ENCODE measurements at regions of chr4 and their contacts with region 1.

Region 1: DNA sequence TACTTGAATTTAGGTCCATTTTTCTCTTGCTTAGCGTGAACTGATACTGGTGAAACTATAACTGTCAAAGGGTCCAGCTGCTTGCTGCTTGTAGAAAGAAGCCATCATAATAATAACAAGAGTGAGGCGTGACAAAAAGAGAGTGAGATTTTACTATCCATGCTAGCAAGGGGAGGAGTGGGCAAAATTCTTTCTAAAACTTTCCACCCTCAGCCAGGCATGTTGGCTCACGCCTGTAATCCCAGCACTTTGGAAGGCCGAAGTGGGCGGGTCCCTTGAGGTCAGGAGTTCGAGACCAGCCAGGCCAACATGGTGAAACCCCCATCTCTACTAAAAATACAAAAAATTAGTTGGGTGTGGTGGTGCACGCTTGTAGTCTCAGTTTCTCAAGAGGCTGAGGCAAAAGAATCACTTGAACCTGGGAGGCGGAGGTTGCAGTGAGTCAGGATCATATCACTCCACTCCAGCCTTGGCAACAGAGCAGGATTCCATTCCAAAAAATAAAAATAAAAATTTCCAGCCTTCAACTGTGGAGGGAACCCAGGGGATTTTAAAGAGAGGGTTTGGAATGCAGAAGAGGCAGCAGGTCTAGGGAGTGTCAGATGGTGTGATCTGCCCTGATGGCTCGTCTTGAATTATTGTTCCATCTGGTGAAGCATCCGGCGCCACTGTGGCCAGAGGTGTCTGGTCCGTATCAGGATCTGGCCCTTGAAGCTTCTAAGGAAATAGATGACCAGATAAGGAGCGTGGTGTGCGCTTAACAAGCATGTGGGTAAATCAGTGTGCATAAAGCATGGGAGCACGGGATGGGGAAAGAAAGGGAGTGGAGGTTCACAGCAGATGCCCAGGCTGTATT is 51.8 kb downstream of the LRP2BP start:
- DNase-seq: no peak
- ATAC-seq: no peak
- H3K4me3 ChIP-seq: no peak overlapping the region
- H3K4me3 Mint-ChIP-seq: no peak overlapping the region
- H3K27ac ChIP-seq: peak overlapping the region in 1 of 2 donors; percentile 67
- H3K27ac Mint-ChIP-seq: peak overlapping the region; percentile 74
- H3K4me1 ChIP-seq: peaks cover 29 to 34% of the 10 kb centered on the region in 2 donors
- H3K4me1 Mint-ChIP-seq: peaks cover 56% of the 10 kb centered on the region
- H3K27me3 ChIP-seq: no peaks in the 10 kb centered on the region
- H3K27me3 Mint-ChIP-seq: no peaks in the 10 kb centered on the region
- CTCF ChIP-seq: no peak

Region 2: DNA sequence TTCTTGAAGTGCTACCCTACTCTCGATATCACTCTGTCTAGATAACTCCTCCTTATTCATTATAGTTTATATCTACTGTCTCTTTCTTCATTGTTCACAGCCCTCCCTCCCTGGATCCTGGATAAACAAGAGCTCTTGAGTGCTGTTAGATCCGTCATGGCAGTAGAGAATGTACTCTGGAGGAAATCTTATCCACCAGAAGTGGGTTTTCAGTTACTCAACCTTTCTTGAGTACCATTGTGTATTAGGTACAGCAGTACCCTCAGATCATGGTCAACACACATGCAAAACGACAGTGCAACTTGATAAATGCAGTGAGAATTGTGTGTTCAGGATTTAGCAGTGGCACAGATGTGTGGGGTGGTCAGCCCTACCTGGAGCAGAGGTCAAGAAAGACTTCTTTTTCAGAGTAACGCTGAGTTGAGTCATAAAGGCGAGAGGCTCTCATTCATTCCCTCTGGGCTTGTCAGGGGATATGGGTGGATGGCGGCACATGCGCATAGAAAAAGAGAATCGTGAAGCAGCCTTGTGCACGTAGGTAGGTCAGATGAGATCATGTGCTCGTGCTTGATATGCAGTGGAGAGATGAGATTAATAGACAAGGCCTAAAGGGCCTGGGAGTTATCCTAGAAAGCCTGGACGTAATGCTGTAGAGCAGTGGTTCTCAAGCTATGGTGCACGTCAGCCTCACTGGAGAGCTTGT is 45.1 kb before region 1 on chr4:
- CTCF ChIA-PET with region 1: no interaction called
- POLR2A ChIA-PET with region 1: no interaction called
- intact Hi-C with region 1: loop called (anchors 10 kb)
- DNase-seq: no peak
- ATAC-seq: no peak
- H3K4me3 ChIP-seq: no peak overlapping the region
- H3K4me3 Mint-ChIP-seq: no peak overlapping the region
- H3K27ac ChIP-seq: no peak overlapping the region
- H3K27ac Mint-ChIP-seq: no peak overlapping the region
- H3K4me1 ChIP-seq: peaks cover 3 to 7% of the 10 kb centered on the region in 2 donors
- H3K4me1 Mint-ChIP-seq: peaks cover 9% of the 10 kb centered on the region
- H3K27me3 ChIP-seq: no peaks in the 10 kb centered on the region
- H3K27me3 Mint-ChIP-seq: no peaks in the 10 kb centered on the region
- CTCF ChIP-seq: no peak

Measured in B cell (primary cell).